Activated CD4-positive, alpha-beta memory T cell treated with anti-CD3 and anti-CD28 coated beads for 36 hours (primary cell): ENCODE measurements at regions of chr16 and their contacts with region 1.

Region 1: GRCh38 chr16:87387942-87388817 is 4.0 kb upstream of the MAP1LC3B start:
- DNase-seq: peak; percentile 94
- H3K4me3 Mint-ChIP-seq: peak overlapping the region; percentile 57
- H3K27ac Mint-ChIP-seq: peak overlapping the region; percentile 96
- H3K4me1 Mint-ChIP-seq: peaks cover 52% of the 10 kb centered on the region
- H3K27me3 Mint-ChIP-seq: peaks cover 2% of the 10 kb centered on the region

Region 2: GRCh38 chr16:87316923-87317749 is 71.0 kb before region 1 on chr16 and contains the start of gene C16orf95:
- CTCF ChIA-PET with region 1: interaction called, 11 read pairs
- POLR2A ChIA-PET with region 1: interaction called, 17 read pairs
- intact Hi-C with region 1: loop called (anchors 1 kb)
- DNase-seq: peak; percentile 97
- H3K4me3 Mint-ChIP-seq: peak within 1 kb of the TSS; percentile 87
- H3K27ac Mint-ChIP-seq: peak within 1 kb of the TSS; percentile 94
- H3K4me1 Mint-ChIP-seq: peaks cover 12% of the 10 kb centered on the region
- H3K27me3 Mint-ChIP-seq: no peaks in the 10 kb centered on the region
- total RNA-seq, gene C16orf95: 10.9 to 15.0 TPM

Region 3: DNA sequence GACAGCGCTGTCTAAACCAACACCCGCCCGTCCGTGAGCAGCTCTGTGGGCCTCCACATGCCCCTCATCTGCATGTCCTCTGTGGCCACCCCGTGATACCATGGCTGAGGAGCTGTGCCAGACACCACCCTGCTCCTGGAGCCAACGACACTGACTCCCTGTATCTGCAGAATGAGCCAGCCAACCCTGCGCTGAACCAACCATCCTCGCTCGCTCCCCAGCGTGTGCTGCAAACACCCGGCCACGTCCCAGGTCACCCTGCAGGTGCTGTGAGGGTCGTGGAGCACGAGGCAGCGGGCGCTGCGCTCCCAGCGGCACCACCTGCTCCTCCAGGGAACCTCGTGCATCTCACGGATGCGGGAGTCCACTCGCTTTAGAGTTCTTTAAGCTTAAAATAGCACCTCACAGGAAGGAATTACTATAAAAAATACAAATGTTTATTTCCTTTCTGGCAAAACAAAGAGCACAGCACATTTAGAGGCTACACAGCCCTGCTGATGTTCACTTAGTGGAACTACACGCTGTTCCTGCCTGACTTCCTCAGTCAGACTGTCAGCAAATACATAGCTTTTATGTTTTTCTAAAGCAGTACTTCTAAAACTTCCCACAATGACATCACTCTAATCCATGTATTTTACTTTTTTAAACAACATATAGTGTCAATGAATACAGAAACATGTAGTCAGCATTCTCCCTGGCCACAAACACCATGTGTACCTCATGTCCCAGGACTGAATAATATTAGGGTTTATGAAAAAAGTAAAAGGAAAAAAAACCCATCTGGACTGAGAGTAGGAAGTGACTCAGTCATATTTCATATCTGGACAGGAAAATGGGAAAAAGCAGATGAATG is 47.4 kb after region 1 on chr16:
- CTCF ChIA-PET with region 1: no interaction called
- POLR2A ChIA-PET with region 1: interaction called, 4 read pairs
- intact Hi-C with region 1: loop called (anchors 5 kb)
- DNase-seq: no peak
- H3K4me3 Mint-ChIP-seq: peak overlapping the region; percentile 26
- H3K27ac Mint-ChIP-seq: no peak overlapping the region
- H3K4me1 Mint-ChIP-seq: peaks cover 20% of the 10 kb centered on the region
- H3K27me3 Mint-ChIP-seq: no peaks in the 10 kb centered on the region

Region 4: GRCh38 chr16:87492721-87493607 is 104.8 kb after region 1 on chr16 and contains the start of gene ZCCHC14:
- CTCF ChIA-PET with region 1: no interaction called
- POLR2A ChIA-PET with region 1: no interaction called
- intact Hi-C with region 1: loop called (anchors 1 kb)
- DNase-seq: peak; percentile 100
- H3K4me3 Mint-ChIP-seq: peak within 1 kb of the TSS; percentile 74
- H3K27ac Mint-ChIP-seq: peak within 1 kb of the TSS; percentile 55
- H3K4me1 Mint-ChIP-seq: peaks cover 48% of the 10 kb centered on the region
- H3K27me3 Mint-ChIP-seq: no peaks in the 10 kb centered on the region
- total RNA-seq, gene ZCCHC14: 8.7 to 10.6 TPM

Region 5: DNA sequence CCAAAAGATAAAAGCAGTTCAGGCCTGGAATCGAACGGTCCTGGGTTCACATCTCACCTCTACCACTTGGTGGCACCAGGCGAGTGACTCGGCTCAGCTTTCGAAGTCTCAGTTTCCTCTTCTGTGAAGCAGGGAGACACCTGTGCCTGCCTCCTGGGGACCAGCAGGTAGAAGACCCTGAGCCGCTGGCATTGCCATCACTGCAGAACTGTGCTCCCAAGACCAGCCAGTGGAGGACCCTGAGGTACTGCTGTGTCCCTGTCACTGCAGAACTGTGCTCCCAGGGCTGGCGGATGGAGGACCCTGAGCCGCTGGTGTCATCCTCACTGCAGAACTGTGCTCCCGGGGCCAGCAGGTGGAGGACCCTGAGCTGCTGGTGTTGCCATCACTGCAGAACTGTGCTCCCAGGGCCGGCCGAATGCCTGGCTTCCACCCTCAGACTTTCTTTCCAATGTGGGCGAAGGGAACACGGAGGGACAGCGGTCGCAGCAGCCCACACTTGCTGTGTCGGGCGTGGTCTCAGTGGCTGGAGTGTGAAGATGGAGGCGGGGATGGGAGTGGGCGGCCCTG is 489.8 kb after region 1 on chr16:
- CTCF ChIA-PET with region 1: no interaction called
- POLR2A ChIA-PET with region 1: no interaction called
- intact Hi-C with region 1: loop called (anchors 10 kb)
- DNase-seq: peak; percentile 68
- H3K4me3 Mint-ChIP-seq: no peak overlapping the region
- H3K27ac Mint-ChIP-seq: no peak overlapping the region
- H3K4me1 Mint-ChIP-seq: peaks cover 39% of the 10 kb centered on the region
- H3K27me3 Mint-ChIP-seq: peaks cover 2% of the 10 kb centered on the region